ENCODE measurements at regions of chr15 and their contacts with region 1.

Region 1: GRCh38 chr15:55241891-55242290 is 45.1 kb upstream of the RSL24D1 start:
- DNase-seq: no peak
- ATAC-seq: no peak
- H3K4me3 ChIP-seq: no peak overlapping the region
- H3K4me3 Mint-ChIP-seq: no peak overlapping the region
- H3K27ac ChIP-seq: no peak overlapping the region
- H3K27ac Mint-ChIP-seq: no peak overlapping the region
- H3K4me1 ChIP-seq: peaks cover 18% of the 10 kb centered on the region
- H3K4me1 Mint-ChIP-seq: peaks cover 58% of the 10 kb centered on the region
- H3K27me3 ChIP-seq: no peaks in the 10 kb centered on the region
- H3K27me3 Mint-ChIP-seq: no peaks in the 10 kb centered on the region
- CTCF ChIP-seq: no peak

Region 2: DNA sequence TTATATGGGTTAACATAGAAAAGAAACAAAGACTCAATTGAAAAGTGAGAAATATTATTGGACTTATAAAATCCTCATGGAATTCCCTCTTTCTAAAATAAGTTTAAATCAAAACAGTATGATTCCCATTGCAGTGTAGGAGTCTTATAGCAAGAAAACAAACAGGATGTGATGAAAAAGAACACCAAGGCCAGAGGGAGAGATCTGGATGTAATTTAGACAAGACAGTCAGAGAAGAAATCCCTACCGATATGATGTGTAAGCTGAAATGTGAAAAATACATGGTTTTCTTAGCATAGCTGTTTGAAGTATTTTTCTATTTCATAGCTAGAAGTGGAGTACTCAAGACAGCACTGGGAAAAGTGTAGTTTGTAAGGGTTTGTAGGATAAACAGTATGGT is 566.6 kb before region 1 on chr15:
- CTCF ChIA-PET with region 1: no interaction called
- POLR2A ChIA-PET with region 1: no interaction called
- intact Hi-C with region 1: no loop called
- DNase-seq: no peak
- ATAC-seq: no peak
- H3K4me3 ChIP-seq: no peak overlapping the region
- H3K4me3 Mint-ChIP-seq: no peak overlapping the region
- H3K27ac ChIP-seq: no peak overlapping the region
- H3K27ac Mint-ChIP-seq: no peak overlapping the region
- H3K4me1 ChIP-seq: no peaks in the 10 kb centered on the region
- H3K4me1 Mint-ChIP-seq: no peaks in the 10 kb centered on the region
- H3K27me3 ChIP-seq: no peaks in the 10 kb centered on the region
- H3K27me3 Mint-ChIP-seq: peaks cover 3% of the 10 kb centered on the region
- CTCF ChIP-seq: no peak

Region 3: DNA sequence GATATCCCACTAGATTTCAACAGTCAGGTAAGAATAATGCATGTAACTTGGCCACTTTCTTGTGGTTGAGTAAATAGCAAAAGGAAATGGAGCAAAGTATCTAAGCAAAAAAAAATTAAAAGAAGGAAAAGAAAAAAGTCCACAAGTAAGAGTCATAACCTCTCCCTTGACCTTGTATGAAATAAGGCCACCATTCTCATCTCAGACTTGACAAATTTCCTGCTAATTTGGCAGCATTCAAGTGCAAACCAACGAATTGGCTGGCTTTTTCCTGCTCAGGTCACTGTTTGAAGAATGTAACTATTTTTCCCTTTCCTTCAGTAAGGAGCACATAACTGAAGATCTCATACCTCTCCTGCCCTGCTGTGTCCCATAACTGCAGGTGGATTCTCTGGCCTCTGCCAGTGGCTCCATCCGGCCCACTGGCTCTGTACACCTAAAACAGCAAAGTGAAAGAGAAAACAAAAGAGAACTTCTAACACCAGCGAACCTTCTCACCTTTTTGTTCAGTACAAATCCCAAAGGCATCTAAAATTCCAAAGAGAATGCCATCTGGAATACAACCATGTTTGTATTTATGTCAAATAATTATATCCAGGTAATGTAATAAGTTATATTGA is 11.7 kb before region 1 on chr15:
- CTCF ChIA-PET with region 1: no interaction called
- POLR2A ChIA-PET with region 1: no interaction called
- intact Hi-C with region 1: loop called in 1 of 2 experiments (anchors 2 kb)
- DNase-seq: peak in 2 of 9 experiments; percentile 30 to 57
- ATAC-seq: peak; percentile 55
- H3K4me3 ChIP-seq: no peak overlapping the region
- H3K4me3 Mint-ChIP-seq: peak overlapping the region; percentile 73
- H3K27ac ChIP-seq: peak overlapping the region in 1 of 2 experiments; percentile 24
- H3K27ac Mint-ChIP-seq: peak overlapping the region; percentile 84
- H3K4me1 ChIP-seq: peaks cover 5% of the 10 kb centered on the region
- H3K4me1 Mint-ChIP-seq: peaks cover 29% of the 10 kb centered on the region
- H3K27me3 ChIP-seq: no peaks in the 10 kb centered on the region
- H3K27me3 Mint-ChIP-seq: no peaks in the 10 kb centered on the region
- CTCF ChIP-seq: no peak

Region 4: GRCh38 chr15:55255714-55256113 is 13.8 kb after region 1 on chr15:
- CTCF ChIA-PET with region 1: interaction called, 3 read pairs
- POLR2A ChIA-PET with region 1: interaction called, 3 read pairs
- intact Hi-C with region 1: loop called in 1 of 2 experiments (anchors 2 kb)
- DNase-seq: peak in 3 of 9 experiments; percentile 20 to 74 (median 56)
- ATAC-seq: peak; percentile 61
- H3K4me3 ChIP-seq: peak overlapping the region; percentile 34 to 50
- H3K4me3 Mint-ChIP-seq: peak overlapping the region; percentile 89
- H3K27ac ChIP-seq: peak overlapping the region; percentile 45 to 87
- H3K27ac Mint-ChIP-seq: peak overlapping the region; percentile 94
- H3K4me1 ChIP-seq: peaks cover 53% of the 10 kb centered on the region
- H3K4me1 Mint-ChIP-seq: peaks cover 79% of the 10 kb centered on the region
- H3K27me3 ChIP-seq: no peaks in the 10 kb centered on the region
- H3K27me3 Mint-ChIP-seq: no peaks in the 10 kb centered on the region
- CTCF ChIP-seq: no peak